K562 (cell line): ENCODE measurements at regions of chr1 and their contacts with region 1.

Region 1: GRCh38 chr1:172002725-172003345 is 161.5 kb downstream of the DNM3 start:
- DNase-seq: peak; percentile 13 to 49 (median 22)
- ATAC-seq: peak; percentile 63; the same call in 2 of the 3 replicates
- H3K4me3 ChIP-seq: no peak overlapping the region
- H3K27ac ChIP-seq: no peak overlapping the region
- H3K4me1 ChIP-seq: no peaks in the 10 kb centered on the region
- H3K27me3 ChIP-seq: no peaks in the 10 kb centered on the region
- CTCF ChIP-seq: peak; percentile 47 to 76 (median 60); a peak in 5 of 6 replicates
- EP300 ChIP-seq: no peak
- POLR2A ChIP-seq: no peak
- RAD21 ChIP-seq: peak; percentile 81 to 83

Region 2: GRCh38 chr1:172398970-172399755 is 396.3 kb after region 1 on chr1:
- CTCF ChIA-PET with region 1: interaction called, 11 read pairs
- POLR2A ChIA-PET with region 1: no interaction called
- in situ Hi-C with region 1: no loop called
- intact Hi-C with region 1: loop called (anchors 1 kb)
- DNase-seq: peak in 2 of 4 experiments; percentile 22 to 25
- ATAC-seq: peak; percentile 39; the same call in 2 of the 3 replicates
- H3K4me3 ChIP-seq: no peak overlapping the region
- H3K27ac ChIP-seq: no peak overlapping the region
- H3K4me1 ChIP-seq: no peaks in the 10 kb centered on the region; a peak in 1 of 5 replicates
- H3K27me3 ChIP-seq: 0 out of 5 replicates have a peak, but pooled peaks cover 0 to 4% of the 10 kb centered on the region in 2 experiments
- CTCF ChIP-seq: peak; percentile 39 to 82 (median 59); a peak in 4 of 6 replicates
- EP300 ChIP-seq: no peak
- POLR2A ChIP-seq: no peak
- RAD21 ChIP-seq: peak; percentile 83 to 86

Region 3: DNA sequence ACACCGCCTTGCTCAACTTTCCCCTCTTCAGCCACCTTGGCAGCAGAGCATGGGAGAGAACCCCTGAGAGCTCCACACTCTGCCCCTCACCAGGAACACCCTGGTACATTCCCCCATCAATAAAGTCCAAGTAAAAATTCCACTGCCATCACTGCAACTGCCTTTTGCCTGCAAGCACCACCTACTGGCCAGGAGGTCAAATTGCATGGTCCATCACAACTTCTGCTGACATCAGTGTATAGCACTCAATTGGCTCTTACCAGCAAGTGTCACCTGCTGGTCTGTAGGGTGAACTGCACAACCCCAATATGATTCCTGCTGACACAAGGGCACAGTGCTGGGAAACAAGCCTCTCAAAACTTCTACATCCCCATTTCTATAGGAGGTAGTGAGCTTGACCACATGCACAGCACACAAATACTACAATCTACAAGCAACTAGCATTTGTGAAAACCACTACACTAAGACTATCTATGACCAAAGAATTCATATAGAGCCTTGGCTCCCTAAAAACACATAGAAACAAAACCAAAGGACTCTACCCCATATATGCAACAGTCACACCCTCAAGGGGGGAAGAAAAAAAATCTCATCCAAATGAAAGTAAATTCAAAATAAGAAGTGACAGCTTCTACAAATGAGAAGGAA is 725.2 kb after region 1 on chr1:
- CTCF ChIA-PET with region 1: no interaction called
- POLR2A ChIA-PET with region 1: no interaction called
- in situ Hi-C with region 1: no loop called
- intact Hi-C with region 1: loop called (anchors 5 kb)
- DNase-seq: peak; percentile 57 to 73 (median 67)
- ATAC-seq: peak; percentile 99
- H3K4me3 ChIP-seq: no peak overlapping the region
- H3K27ac ChIP-seq: no peak overlapping the region
- H3K4me1 ChIP-seq: no peaks in the 10 kb centered on the region; a peak in 2 of 5 replicates
- H3K27me3 ChIP-seq: no peaks in the 10 kb centered on the region
- CTCF ChIP-seq: peak; percentile 97 to 99 (median 97)
- EP300 ChIP-seq: no peak
- POLR2A ChIP-seq: no peak
- RAD21 ChIP-seq: peak; percentile 50 to 94